Activated naive CD4-positive, alpha-beta T cell treated with anti-CD3 and anti-CD28 coated beads for 36 hours (primary cell): ENCODE measurements at regions of chr5 and their contacts with region 1.

Region 1: DNA sequence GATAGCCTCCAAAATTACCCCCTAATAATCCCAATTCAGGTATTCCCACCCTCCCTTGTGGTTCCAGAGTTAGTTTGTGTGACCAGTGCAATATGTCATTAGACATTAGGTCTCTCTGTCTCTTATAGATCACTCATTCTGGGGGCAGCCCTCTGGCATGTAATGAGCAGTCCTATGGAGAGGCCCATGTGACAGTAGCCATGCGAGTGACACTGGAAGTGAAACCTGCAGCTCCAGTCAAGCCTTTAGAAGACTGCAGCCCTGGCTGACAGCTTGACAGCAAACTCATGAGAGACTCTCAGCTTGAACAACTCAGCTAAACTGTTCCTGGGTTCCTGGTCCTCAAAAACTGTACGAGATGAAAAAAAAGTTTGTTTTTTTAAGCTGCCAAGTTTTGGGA is 54.0 kb upstream of the HSPB3 start:
- DNase-seq: no peak
- H3K4me3 Mint-ChIP-seq: no peak overlapping the region
- H3K27ac Mint-ChIP-seq: no peak overlapping the region
- H3K4me1 Mint-ChIP-seq: no peaks in the 10 kb centered on the region
- H3K27me3 Mint-ChIP-seq: no peaks in the 10 kb centered on the region

Region 2: DNA sequence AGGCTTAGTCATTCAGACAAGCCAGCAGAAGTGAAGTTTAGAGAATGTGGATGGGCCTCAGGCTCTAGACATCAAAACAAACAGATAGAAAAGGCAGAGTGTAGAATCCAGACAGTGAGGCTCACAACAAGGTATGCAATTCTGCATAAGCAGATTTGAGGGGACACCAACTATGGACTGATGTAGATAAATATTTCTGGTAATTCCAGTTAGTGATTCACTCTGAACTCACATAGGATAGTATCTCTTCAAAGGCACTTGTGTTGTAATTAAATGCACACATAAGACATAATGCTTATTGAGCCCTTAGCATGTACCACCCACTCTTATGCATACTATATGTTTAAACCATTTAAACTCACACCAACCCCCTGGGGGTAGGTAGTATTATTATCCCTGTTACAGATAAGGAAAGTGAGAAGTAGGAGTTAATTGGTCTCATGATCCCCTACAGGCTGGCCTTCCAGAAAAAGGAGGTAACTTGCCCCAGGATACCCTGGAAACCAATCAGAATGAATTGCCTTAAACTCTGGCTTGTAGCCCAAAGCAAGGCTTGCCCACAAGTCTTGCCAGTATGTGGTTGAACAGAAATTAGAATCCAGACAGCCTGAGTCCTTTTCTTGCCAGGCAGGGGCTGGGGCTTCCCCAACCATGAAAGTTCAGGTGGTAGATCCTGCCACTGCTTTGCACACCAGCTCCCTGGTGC is 14.5 kb after region 1 on chr5:
- CTCF ChIA-PET with region 1: interaction called, 12 read pairs
- intact Hi-C with region 1: no loop called
- DNase-seq: peak; percentile 8
- H3K4me3 Mint-ChIP-seq: no peak overlapping the region
- H3K27ac Mint-ChIP-seq: no peak overlapping the region
- H3K4me1 Mint-ChIP-seq: no peaks in the 10 kb centered on the region
- H3K27me3 Mint-ChIP-seq: peaks cover 2% of the 10 kb centered on the region